B cell (primary cell): ENCODE measurements at regions of chr22 and their contacts with region 1.

Region 1: DNA sequence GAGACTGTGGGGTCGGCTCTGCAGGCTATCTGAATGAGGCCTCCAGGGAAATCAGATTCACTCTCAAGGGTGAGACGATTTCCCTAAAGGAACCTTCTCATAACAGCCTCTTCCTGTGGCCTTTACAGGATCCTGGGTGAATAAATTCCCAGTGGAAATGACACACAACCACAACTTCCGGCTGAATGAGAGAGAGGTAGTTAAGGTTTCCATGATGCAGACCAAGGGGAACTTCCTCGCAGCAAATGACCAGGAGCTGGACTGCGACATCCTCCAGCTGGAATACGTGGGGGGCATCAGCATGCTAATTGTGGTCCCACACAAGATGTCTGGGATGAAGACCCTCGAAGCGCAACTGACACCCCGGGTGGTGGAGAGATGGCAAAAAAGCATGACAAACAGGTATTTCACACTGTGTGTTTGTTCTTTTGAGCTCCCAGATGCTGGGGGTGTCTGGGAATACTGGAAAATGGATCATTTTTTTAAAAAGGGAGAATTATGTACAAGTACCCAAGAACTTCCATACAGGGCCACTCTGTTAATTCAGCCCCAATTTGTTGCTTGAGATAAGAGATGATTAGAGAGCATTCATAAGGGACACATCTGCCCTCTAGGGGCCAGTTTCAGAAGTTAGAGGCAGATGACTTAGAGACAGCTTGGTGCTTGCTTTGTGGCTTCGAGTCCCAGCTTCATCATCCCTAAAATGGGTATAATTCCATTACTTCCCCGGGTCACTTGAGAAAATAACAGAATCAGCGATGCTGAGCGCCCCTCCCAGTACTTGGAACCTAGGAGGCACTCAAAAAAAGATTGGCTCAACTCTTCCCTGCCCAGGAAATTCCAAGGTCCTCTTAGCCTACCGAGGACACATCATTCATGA is 10.2 kb downstream of the SERPIND1 start:
- DNase-seq: peak; percentile 63
- ATAC-seq: peak; percentile 75
- H3K4me3 ChIP-seq: no peak overlapping the region
- H3K4me3 Mint-ChIP-seq: no peak overlapping the region
- H3K27ac ChIP-seq: no peak overlapping the region
- H3K27ac Mint-ChIP-seq: peak overlapping the region; percentile 27
- H3K4me1 ChIP-seq: peaks cover 7 to 9% of the 10 kb centered on the region in 2 donors
- H3K4me1 Mint-ChIP-seq: peaks cover 11% of the 10 kb centered on the region
- H3K27me3 ChIP-seq: no peaks in the 10 kb centered on the region
- H3K27me3 Mint-ChIP-seq: no peaks in the 10 kb centered on the region
- CTCF ChIP-seq: peak; percentile 82

Region 2: DNA sequence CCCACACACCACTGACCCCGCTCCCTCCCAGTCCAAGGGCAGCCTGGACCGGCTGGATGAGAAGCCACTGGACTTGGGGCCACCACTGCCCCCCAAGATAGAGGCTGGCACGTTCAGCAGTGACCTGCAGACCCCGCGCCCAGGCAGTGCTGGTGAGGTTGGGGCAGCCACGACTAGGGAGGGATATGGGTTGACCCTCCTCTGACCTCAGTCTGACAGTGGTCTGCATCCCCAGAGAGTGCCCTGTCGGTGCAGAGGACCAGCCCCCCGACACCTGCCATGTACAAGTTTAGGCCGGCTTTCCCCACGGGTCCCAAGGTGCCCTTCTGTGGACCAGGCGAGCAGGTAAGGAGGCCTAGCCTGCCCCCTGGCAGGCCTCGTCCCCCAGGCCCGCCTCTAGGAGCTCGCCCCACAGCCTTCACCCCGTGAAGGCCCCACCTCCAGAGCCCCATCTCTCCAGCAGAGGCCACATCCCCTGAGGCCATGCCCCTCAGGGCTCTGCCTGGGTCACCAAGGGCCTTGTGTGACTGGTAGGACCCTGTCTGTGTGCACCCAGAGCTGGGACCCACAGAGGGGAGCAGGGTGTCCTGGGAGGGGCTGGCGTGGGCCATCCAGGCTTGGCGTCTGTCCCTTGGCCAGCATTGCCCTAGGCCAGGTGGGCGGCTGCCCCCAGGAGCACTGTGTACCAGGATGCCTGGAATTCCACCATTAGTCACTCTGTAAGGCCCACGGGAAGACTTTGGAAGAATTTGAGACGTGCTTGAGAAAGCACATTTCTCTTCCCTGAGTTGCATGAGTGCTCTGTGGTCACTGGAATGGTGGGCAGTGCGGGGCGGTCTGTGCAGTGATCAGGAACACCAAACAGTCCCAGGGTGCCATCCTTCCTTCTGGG is 642.7 kb before region 1 on chr22:
- CTCF ChIA-PET with region 1: no interaction called
- POLR2A ChIA-PET with region 1: no interaction called
- intact Hi-C with region 1: no loop called
- DNase-seq: no peak
- ATAC-seq: no peak
- H3K4me3 ChIP-seq: no peak overlapping the region
- H3K4me3 Mint-ChIP-seq: no peak overlapping the region
- H3K27ac ChIP-seq: no peak overlapping the region
- H3K27ac Mint-ChIP-seq: no peak overlapping the region
- H3K4me1 ChIP-seq: peaks cover 0 to 9% of the 10 kb centered on the region in 2 donors
- H3K4me1 Mint-ChIP-seq: peaks cover 15% of the 10 kb centered on the region
- H3K27me3 ChIP-seq: no peaks in the 10 kb centered on the region
- H3K27me3 Mint-ChIP-seq: no peaks in the 10 kb centered on the region
- CTCF ChIP-seq: no peak

Region 3: DNA sequence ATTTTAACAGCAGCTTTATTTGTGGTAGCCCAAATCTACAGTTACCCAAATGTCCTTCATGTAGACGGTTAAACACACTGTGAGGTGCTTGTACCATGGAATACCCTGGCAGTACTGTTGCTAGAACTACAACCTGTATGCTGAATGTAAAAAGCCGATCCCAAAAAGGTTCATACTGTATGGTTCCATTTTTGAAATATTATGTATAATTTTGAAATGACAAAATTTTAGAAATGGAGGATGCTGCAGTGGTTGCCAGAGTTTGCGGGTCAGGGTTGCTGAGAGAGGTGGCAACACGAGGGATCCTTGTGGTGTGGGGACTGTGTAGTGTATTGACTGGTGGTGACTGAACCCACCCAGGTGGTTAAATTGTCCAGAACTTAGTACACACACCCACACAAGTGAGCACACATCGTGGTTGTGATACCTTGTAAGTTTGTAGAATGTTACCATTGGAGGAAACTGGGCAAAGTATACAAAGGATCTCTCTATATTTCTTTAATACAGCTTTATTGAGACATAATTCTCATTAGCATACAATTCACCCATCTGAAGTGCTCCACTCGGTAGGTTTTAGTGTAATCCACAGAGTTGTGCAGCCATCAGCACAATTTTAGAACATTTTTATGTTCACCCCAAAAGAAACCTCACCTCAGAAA is 220.7 kb before region 1 on chr22:
- CTCF ChIA-PET with region 1: interaction called, 13 read pairs
- POLR2A ChIA-PET with region 1: no interaction called
- intact Hi-C with region 1: loop called (anchors 1 kb)
- DNase-seq: no peak
- ATAC-seq: no peak
- H3K4me3 ChIP-seq: no peak overlapping the region
- H3K4me3 Mint-ChIP-seq: no peak overlapping the region
- H3K27ac ChIP-seq: no peak overlapping the region
- H3K27ac Mint-ChIP-seq: no peak overlapping the region
- H3K4me1 ChIP-seq: peaks cover 0 to 3% of the 10 kb centered on the region in 2 donors
- H3K4me1 Mint-ChIP-seq: no peaks in the 10 kb centered on the region
- H3K27me3 ChIP-seq: no peaks in the 10 kb centered on the region
- H3K27me3 Mint-ChIP-seq: no peaks in the 10 kb centered on the region
- CTCF ChIP-seq: no peak

Region 4: DNA sequence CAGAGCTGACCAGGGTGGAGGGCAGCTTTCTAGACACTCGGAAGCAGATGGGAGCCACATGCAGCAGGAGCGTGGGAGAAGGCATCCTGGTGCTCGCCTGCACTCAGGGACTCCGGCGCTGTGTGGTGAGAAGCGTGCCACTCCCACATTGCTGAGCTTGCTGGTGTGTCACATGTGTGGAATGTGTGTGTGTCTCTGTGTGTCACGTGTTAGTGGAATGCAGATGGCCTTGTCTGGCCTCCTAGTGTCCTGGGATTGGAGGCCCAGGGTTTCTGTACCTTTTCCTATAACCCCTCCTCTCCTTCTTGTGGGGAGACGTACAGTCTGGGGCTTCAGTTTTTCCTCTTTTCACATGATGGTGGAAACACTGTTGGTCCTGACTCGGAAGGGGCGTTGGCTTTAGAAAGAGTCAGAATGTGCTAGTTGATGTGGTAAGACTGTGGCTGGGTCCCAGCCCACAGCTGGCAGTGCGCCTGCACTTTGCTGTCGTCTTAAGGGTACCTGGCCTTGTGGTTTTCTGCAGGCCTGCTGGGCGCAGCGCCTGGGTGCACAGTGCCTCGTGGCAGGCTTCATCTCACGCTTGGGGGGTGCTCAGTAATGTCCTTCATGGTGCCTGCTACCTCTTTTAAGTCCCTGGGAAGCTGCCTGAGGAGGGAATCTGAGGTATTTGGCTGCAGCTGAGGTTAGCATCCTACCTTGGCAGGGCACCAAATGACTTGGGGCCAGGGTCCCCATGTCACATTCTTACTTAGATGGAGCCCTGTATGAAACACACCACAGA is 214.9 kb before region 1 on chr22:
- CTCF ChIA-PET with region 1: interaction called, 13 read pairs
- POLR2A ChIA-PET with region 1: no interaction called
- intact Hi-C with region 1: loop called (anchors 1 kb)
- DNase-seq: peak; percentile 56
- ATAC-seq: peak; percentile 62
- H3K4me3 ChIP-seq: no peak overlapping the region
- H3K4me3 Mint-ChIP-seq: no peak overlapping the region
- H3K27ac ChIP-seq: peak overlapping the region in 1 of 2 donors; percentile 9
- H3K27ac Mint-ChIP-seq: peak overlapping the region; percentile 59
- H3K4me1 ChIP-seq: peaks cover 0 to 16% of the 10 kb centered on the region in 2 donors
- H3K4me1 Mint-ChIP-seq: peaks cover 6% of the 10 kb centered on the region
- H3K27me3 ChIP-seq: no peaks in the 10 kb centered on the region
- H3K27me3 Mint-ChIP-seq: no peaks in the 10 kb centered on the region
- CTCF ChIP-seq: no peak

Region 5: DNA sequence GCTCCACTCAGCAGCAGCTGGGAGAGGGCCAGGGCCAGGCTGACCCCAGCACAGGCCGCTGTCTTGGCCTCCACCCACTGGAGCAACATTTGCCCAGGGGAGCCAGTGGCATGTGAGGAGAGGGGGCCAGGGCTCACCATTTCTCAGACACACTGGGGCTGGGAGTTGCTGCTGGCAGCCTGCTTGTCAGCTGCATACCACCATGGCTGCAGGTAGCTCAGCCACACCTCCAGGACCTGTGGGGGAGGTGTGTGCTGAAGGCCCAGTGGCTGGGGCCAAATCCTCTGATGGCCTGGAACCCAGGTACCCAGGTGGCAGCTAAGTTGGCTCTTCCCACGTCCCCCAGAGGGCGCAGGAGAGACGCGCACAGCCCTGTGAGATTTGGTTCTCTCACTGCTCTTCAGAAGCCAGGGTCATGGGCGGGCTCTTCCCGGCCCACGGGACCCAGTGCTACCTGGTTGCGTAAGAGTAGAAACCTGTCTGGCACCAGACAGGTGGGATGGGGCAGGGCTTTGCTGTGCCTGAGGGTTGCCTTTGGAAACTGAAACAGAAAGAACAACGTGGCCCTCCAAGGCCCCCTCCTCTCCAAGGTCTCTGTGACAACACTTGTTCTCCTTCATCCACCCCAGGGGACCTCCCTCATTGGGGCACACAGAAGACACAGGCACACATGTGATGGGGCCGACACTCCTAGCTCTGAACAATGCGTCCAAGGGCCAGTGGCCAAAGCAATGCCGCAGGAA is 177.9 kb before region 1 on chr22:
- CTCF ChIA-PET with region 1: interaction called, 4 read pairs
- POLR2A ChIA-PET with region 1: no interaction called
- intact Hi-C with region 1: loop called (anchors 1 kb)
- DNase-seq: peak; percentile 73
- ATAC-seq: peak; percentile 63
- H3K4me3 ChIP-seq: no peak overlapping the region
- H3K4me3 Mint-ChIP-seq: no peak overlapping the region
- H3K27ac ChIP-seq: no peak overlapping the region
- H3K27ac Mint-ChIP-seq: no peak overlapping the region
- H3K4me1 ChIP-seq: peaks cover 0 to 4% of the 10 kb centered on the region in 2 donors
- H3K4me1 Mint-ChIP-seq: peaks cover 2% of the 10 kb centered on the region
- H3K27me3 ChIP-seq: no peaks in the 10 kb centered on the region
- H3K27me3 Mint-ChIP-seq: peaks cover 5% of the 10 kb centered on the region
- CTCF ChIP-seq: peak; percentile 72

Region 6: GRCh38 chr22:20771918-20772625 is 12.0 kb before region 1 on chr22:
- CTCF ChIA-PET with region 1: interaction called, 11 read pairs
- POLR2A ChIA-PET with region 1: no interaction called
- intact Hi-C with region 1: no loop called
- DNase-seq: no peak
- ATAC-seq: no peak
- H3K4me3 ChIP-seq: no peak overlapping the region
- H3K4me3 Mint-ChIP-seq: no peak overlapping the region
- H3K27ac ChIP-seq: no peak overlapping the region
- H3K27ac Mint-ChIP-seq: no peak overlapping the region
- H3K4me1 ChIP-seq: no peaks in the 10 kb centered on the region
- H3K4me1 Mint-ChIP-seq: peaks cover 4% of the 10 kb centered on the region
- H3K27me3 ChIP-seq: no peaks in the 10 kb centered on the region
- H3K27me3 Mint-ChIP-seq: no peaks in the 10 kb centered on the region
- CTCF ChIP-seq: no peak

Region 7: GRCh38 chr22:20926243-20926642 is 142.2 kb after region 1 on chr22:
- CTCF ChIA-PET with region 1: no interaction called
- POLR2A ChIA-PET with region 1: no interaction called
- intact Hi-C with region 1: no loop called
- DNase-seq: peak; percentile 16
- ATAC-seq: no peak
- H3K4me3 ChIP-seq: no peak overlapping the region
- H3K4me3 Mint-ChIP-seq: peak overlapping the region; percentile 55
- H3K27ac ChIP-seq: peak overlapping the region in 1 of 2 donors; percentile 40
- H3K27ac Mint-ChIP-seq: peak overlapping the region; percentile 12
- H3K4me1 ChIP-seq: peaks cover 31 to 50% of the 10 kb centered on the region in 2 donors
- H3K4me1 Mint-ChIP-seq: peaks cover 53% of the 10 kb centered on the region
- H3K27me3 ChIP-seq: no peaks in the 10 kb centered on the region
- H3K27me3 Mint-ChIP-seq: no peaks in the 10 kb centered on the region
- CTCF ChIP-seq: no peak

Region 8: DNA sequence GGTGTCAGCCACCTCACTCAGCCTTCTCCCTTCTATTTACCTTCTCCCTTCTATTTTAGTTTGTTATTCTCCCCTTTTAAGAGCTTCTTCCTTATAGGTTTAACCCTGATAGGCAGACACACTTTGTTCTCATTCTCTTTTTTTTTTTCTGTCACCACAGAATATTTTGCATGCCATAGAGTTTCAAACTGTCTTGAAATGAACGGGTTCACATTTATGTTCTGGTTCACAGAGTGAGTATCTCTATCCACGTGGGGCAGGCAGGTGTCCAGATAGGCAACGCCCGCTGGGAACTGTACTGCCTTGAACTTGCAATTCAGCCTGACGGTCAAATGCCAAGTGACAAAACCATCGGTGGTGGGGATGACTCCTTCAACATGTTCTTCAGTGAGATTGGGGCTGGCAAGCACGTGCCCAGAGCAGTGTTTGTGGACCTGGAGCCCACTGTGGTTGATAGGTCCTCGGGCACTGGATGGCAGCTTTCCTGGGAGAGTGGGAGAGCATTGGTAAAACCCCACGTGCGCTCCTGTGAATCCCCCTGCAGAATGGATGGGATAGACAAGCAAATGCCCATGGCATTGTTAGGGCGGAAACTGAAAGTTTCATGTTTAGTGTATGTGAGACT is 281.3 kb after region 1 on chr22:
- CTCF ChIA-PET with region 1: no interaction called
- POLR2A ChIA-PET with region 1: no interaction called
- intact Hi-C with region 1: no loop called
- DNase-seq: no peak
- ATAC-seq: no peak
- H3K4me3 ChIP-seq: no peak overlapping the region
- H3K4me3 Mint-ChIP-seq: no peak overlapping the region
- H3K27ac ChIP-seq: no peak overlapping the region
- H3K27ac Mint-ChIP-seq: no peak overlapping the region
- H3K4me1 ChIP-seq: no peaks in the 10 kb centered on the region
- H3K4me1 Mint-ChIP-seq: no peaks in the 10 kb centered on the region
- H3K27me3 ChIP-seq: peaks cover 0 to 4% (median 0%) of the 10 kb centered on the region in 4 experiments
- H3K27me3 Mint-ChIP-seq: peaks cover 6% of the 10 kb centered on the region
- CTCF ChIP-seq: no peak